Mammary epithelial cell (primary cell): ENCODE measurements at regions of chr9 and their contacts with region 1.

Region 1: GRCh38 chr9:106892632-106893031 is 29.7 kb downstream of the ZNF462 start:
- DNase-seq: peak; percentile 95
- H3K4me3 ChIP-seq: no peak overlapping the region
- H3K27ac ChIP-seq: peak overlapping the region; percentile 75
- H3K4me1 ChIP-seq: peaks cover 64% of the 10 kb centered on the region
- H3K27me3 ChIP-seq: no peaks in the 10 kb centered on the region
- CTCF ChIP-seq: no peak

Region 2: GRCh38 chr9:106916479-106917240 is 24.0 kb after region 1 on chr9:
- CTCF ChIA-PET with region 1: interaction called, 3 read pairs
- dilution Hi-C with region 1: no loop called
- in situ Hi-C with region 1: no loop called
- intact Hi-C with region 1: loop called (anchors 2 kb)
- DNase-seq: peak; percentile 87
- H3K4me3 ChIP-seq: peak overlapping the region in 1 of 3 experiments; percentile 3
- H3K27ac ChIP-seq: peak overlapping the region; percentile 68
- H3K4me1 ChIP-seq: peaks cover 35% of the 10 kb centered on the region
- H3K27me3 ChIP-seq: no peaks in the 10 kb centered on the region
- CTCF ChIP-seq: no peak

Region 3: GRCh38 chr9:106970219-106970975 is 77.8 kb after region 1 on chr9:
- CTCF ChIA-PET with region 1: no interaction called
- dilution Hi-C with region 1: loop called (anchors 5 kb)
- in situ Hi-C with region 1: no loop called
- intact Hi-C with region 1: no loop called
- DNase-seq: no peak
- H3K4me3 ChIP-seq: no peak overlapping the region
- H3K27ac ChIP-seq: no peak overlapping the region
- H3K4me1 ChIP-seq: peaks cover 3% of the 10 kb centered on the region
- H3K27me3 ChIP-seq: no peaks in the 10 kb centered on the region
- CTCF ChIP-seq: no peak